Activated CD4-positive, alpha-beta memory T cell treated with anti-CD3 and anti-CD28 coated beads for 36 hours (primary cell): ENCODE measurements at regions of chr6 and their contacts with region 1.

Region 1: GRCh38 chr6:122530440-122531046 is 58.9 kb upstream of the SERINC1 start:
- DNase-seq: peak; percentile 40
- H3K4me3 Mint-ChIP-seq: no peak overlapping the region
- H3K27ac Mint-ChIP-seq: no peak overlapping the region
- H3K4me1 Mint-ChIP-seq: no peaks in the 10 kb centered on the region
- H3K27me3 Mint-ChIP-seq: peaks cover 22% of the 10 kb centered on the region

Region 2: GRCh38 chr6:122376246-122376645 is 154.3 kb before region 1 on chr6:
- CTCF ChIA-PET with region 1: interaction called, 111 read pairs
- POLR2A ChIA-PET with region 1: no interaction called
- intact Hi-C with region 1: loop called (anchors 1 kb)
- DNase-seq: no peak
- H3K4me3 Mint-ChIP-seq: no peak overlapping the region
- H3K27ac Mint-ChIP-seq: no peak overlapping the region
- H3K4me1 Mint-ChIP-seq: peaks cover 13% of the 10 kb centered on the region
- H3K27me3 Mint-ChIP-seq: peaks cover 18% of the 10 kb centered on the region

Region 3: DNA sequence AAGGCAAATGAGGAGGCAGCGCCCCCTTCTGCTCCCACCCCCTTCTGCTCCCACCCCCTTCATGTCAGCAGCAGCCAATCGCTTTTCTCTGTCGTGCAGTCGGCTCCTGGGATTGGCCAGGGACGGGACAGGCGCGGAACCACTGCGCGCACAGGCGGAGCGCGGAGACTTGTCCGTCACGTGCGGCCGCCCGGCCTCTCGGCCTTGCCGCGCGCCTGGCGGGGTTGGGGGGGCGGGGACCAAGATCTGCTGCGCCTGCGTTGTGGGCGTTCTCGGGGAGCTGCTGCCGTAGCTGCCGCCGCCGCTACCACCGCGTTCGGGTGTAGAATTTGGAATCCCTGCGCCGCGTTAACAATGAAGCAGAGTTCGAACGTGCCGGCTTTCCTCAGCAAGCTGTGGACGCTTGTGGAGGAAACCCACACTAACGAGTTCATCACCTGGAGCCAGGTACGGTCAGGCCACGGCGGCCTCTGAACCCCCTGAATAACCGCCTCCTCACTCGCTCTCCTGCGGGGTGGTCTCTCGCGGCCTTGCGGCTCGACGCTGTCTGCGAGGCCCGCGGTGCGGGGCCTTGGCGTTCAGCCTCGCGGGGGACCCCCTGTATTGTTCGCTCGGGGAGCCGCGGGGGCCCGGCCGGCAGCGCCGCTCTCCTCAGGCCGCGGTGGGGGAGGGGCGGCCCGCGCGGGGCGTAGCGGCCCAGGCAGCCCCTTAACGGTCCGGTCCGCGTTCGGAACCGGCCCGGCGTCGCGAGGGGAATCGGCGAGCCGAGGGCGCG is 131.0 kb before region 1 on chr6 and contains the start of gene HSF2:
- CTCF ChIA-PET with region 1: interaction called, 7 read pairs
- POLR2A ChIA-PET with region 1: no interaction called
- intact Hi-C with region 1: loop called (anchors 5 kb)
- DNase-seq: peak; percentile 97
- H3K4me3 Mint-ChIP-seq: peak within 1 kb of the TSS; percentile 95
- H3K27ac Mint-ChIP-seq: peak within 1 kb of the TSS; percentile 91
- H3K4me1 Mint-ChIP-seq: peaks cover 36% of the 10 kb centered on the region
- H3K27me3 Mint-ChIP-seq: no peaks in the 10 kb centered on the region
- total RNA-seq, gene HSF2: 16.0 to 18.5 TPM

Region 4: GRCh38 chr6:122491919-122492555 is 38.5 kb before region 1 on chr6:
- CTCF ChIA-PET with region 1: interaction called, 234 read pairs
- POLR2A ChIA-PET with region 1: interaction called, 3 read pairs
- intact Hi-C with region 1: loop called (anchors 1 kb)
- DNase-seq: peak; percentile 78
- H3K4me3 Mint-ChIP-seq: no peak overlapping the region
- H3K27ac Mint-ChIP-seq: no peak overlapping the region
- H3K4me1 Mint-ChIP-seq: peaks cover 5% of the 10 kb centered on the region
- H3K27me3 Mint-ChIP-seq: peaks cover 8% of the 10 kb centered on the region

Region 5: GRCh38 chr6:122520179-122520578 is 10.4 kb before region 1 on chr6:
- CTCF ChIA-PET with region 1: interaction called, 17 read pairs
- POLR2A ChIA-PET with region 1: no interaction called
- intact Hi-C with region 1: no loop called
- DNase-seq: no peak
- H3K4me3 Mint-ChIP-seq: no peak overlapping the region
- H3K27ac Mint-ChIP-seq: no peak overlapping the region
- H3K4me1 Mint-ChIP-seq: no peaks in the 10 kb centered on the region
- H3K27me3 Mint-ChIP-seq: peaks cover 10% of the 10 kb centered on the region

Region 6: GRCh38 chr6:122589115-122589514 is 58.6 kb after region 1 on chr6:
- CTCF ChIA-PET with region 1: no interaction called
- POLR2A ChIA-PET with region 1: no interaction called
- intact Hi-C with region 1: no loop called
- DNase-seq: no peak
- H3K4me3 Mint-ChIP-seq: no peak overlapping the region
- H3K27ac Mint-ChIP-seq: no peak overlapping the region
- H3K4me1 Mint-ChIP-seq: no peaks in the 10 kb centered on the region
- H3K27me3 Mint-ChIP-seq: no peaks in the 10 kb centered on the region